Thyroid gland (tissue), 4 donors: ENCODE measurements at regions of chr2 and their contacts with region 1.

Region 1: DNA sequence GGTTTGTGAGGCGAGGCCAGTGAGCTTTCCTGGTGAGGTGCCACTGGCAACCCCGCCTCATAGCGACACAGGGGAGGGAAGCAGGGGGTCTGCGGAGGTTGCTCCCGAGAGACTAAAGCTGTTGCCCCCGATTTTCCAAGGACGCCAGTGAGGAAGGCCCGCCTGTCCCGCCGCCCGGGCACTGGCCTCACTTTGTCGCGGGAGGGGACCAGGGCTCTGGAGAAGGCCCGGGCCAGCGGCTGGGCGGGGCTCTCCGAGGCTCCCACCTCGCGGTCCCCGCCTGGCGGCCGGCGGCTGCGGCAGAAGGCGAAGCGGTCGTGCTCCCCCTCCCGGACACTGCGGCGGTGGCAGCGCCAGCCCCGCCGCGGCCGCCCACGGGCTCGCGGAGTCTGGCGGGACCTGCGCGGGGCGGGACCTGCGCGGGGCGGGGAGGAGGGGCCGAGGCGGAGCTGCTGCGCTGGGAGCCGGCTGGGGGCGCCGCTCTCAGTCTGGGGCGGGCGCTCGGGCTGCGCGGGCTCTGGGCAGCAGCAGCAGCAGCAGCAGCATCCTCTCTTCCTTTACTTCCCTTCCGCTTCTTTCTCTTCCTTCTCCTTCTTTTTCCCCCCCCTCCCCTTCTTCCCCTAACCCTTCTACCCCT is at the start of gene MAP2:
- DNase-seq: peak; percentile 87 to 91
- H3K4me3 ChIP-seq: peak within 1 kb of the TSS; percentile 37 to 56 (median 50)
- H3K27ac ChIP-seq: peak within 1 kb of the TSS; percentile 75 to 84 (median 76)
- H3K4me1 ChIP-seq: peaks cover 19 to 21% of the 10 kb centered on the region in 2 donors
- H3K27me3 ChIP-seq: no peaks in the 10 kb centered on the region
- CTCF ChIP-seq: peak; percentile 31 to 99 (median 83)
- POLR2A ChIP-seq: peak; percentile 28 to 90
- total RNA-seq, gene MAP2: 73.8 to 211 (median 122) TPM

Region 2: DNA sequence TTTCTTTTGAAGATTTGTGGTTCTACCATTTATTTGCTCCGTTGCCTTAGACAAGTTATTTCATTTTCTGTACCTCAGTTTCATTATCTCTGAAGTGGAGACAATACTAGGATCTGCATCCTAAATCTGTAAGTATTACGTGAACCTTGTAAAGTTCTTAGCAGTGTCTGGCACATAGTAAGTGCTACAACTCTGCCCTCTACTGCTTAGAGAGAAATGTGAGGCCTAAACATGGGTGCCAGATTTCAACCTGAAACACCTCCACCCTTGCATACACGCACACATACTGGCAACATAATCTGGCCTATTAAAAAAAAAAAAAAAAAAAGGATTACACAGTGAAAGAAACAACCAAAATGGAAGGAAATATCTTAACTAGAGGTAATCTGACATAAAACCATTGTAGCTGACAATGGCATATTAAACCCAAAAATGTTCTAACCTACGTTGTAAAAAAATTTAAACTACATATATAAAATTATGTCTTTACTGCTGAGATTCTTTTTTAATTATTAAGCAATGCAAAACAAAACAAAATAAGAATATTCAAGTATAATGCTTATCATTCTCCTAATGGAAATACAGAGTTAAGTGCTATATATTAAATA is 132.8 kb after region 1 on chr2:
- intact Hi-C with region 1: loop called (anchors 10 kb)
- DNase-seq: no peak
- H3K4me3 ChIP-seq: no peak overlapping the region
- H3K27ac ChIP-seq: no peak overlapping the region
- H3K4me1 ChIP-seq: no peaks in the 10 kb centered on the region
- H3K27me3 ChIP-seq: no peaks in the 10 kb centered on the region
- CTCF ChIP-seq: peak in 3 of 6 experiments; percentile 48 to 60 (median 51)
- POLR2A ChIP-seq: no peak

Region 3: DNA sequence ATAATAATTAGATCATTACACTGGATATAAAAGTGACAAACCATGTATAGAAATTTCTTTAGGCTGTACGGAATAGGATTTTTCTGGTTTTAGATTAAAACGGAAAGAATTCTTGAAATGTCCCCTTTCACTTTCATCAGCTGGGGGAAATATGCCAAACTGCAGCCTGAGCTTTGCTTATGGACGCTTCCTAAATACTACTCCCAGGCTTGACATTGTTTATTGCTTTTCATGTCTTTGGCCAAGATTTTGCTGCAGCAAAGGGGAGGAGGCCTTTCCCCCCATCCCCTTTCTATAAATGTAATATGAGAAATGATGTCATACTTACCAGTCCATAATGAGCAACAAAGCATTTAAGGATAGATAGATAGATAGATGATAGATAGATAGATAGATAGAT is 158.6 kb after region 1 on chr2:
- intact Hi-C with region 1: no loop called
- DNase-seq: no peak
- H3K4me3 ChIP-seq: no peak overlapping the region
- H3K27ac ChIP-seq: no peak overlapping the region
- H3K4me1 ChIP-seq: no peaks in the 10 kb centered on the region
- H3K27me3 ChIP-seq: no peaks in the 10 kb centered on the region
- CTCF ChIP-seq: no peak
- POLR2A ChIP-seq: no peak